ENCODE measurements at regions of chr6 and their contacts with region 1.

Region 1: DNA sequence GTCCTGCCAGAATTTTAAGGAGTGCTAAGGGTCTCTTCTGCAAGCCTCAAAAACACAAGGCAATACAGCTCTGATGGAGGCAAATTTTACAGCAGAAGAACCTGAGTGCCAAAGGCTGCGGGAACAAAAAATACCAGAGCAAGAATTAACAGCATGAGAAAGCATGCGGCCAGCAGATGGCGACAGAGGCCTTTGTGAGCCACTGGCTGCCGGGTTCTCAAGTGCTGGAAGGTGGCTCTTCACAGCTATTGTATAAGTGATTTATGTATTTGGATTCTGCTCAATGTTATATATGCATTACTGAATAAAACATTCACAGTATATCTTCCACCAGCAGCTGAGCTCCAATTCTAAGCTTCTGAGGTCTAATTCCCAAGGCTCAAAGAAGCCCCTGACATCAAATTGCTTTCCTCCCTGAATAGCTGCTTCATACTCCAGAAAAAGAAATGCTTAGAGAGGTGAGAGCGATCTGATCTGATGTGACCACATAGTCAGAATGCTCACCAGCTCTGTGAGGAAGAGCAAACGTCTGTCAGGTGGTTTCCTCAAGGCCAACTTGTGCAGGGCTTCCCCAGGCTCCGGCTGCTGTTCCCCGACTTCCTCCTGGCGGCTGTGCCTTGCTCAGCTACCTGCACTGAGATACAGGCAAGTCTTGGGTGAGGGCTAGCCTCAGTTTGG is 58.6 kb downstream of the PPP1R3G start:
- DNase-seq: peak; percentile 77
- H3K4me3 ChIP-seq: no peak overlapping the region; a peak in 1 of 4 replicates
- H3K27ac ChIP-seq: no peak overlapping the region
- H3K4me1 ChIP-seq: no peaks in the 10 kb centered on the region
- H3K27me3 ChIP-seq: no peaks in the 10 kb centered on the region
- CTCF ChIP-seq: peak; percentile 96
- EP300 ChIP-seq: no peak
- RAD21 ChIP-seq: peak; percentile 97

Region 2: DNA sequence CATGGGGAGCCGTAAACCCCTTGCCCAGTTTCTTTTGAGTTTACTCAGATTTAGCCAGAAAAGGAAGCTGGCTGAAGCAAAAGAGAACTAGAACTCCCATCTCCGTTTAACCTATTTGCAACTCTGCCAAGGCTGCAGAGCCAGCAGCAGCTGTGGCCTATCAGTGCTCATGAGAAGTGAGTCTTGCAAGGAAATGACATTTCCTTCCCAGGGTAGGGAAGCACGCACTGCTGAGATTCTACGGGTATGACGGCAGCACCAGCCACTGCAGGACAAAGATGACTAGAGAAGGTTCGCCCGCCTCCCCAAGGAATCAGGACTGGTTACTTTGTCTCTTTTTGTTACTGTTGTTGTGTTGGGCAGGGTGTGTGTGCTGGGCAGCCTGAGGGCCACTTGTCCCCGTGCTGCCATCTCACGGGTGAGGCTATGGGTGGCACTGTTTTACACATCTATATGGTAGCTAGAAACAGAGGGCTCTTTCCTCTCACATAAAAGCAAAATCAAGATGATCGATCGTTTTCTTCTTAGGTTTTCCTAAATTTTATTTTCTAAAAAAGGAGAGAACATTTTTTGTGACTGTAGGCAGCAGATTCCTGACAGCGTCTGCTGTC is 10.9 kb before region 1 on chr6:
- CTCF ChIA-PET with region 1: interaction called, 20 read pairs
- POLR2A ChIA-PET with region 1: no interaction called
- DNase-seq: no peak
- H3K4me3 ChIP-seq: no peak overlapping the region
- H3K27ac ChIP-seq: no peak overlapping the region
- H3K4me1 ChIP-seq: peaks cover 0 to 4% of the 10 kb centered on the region in 2 experiments; a peak in 1 of 4 replicates
- H3K27me3 ChIP-seq: no peaks in the 10 kb centered on the region
- CTCF ChIP-seq: no peak
- EP300 ChIP-seq: no peak
- RAD21 ChIP-seq: no peak

Region 3: GRCh38 chr6:5167501-5167900 is 23.7 kb after region 1 on chr6:
- CTCF ChIA-PET with region 1: interaction called, 18 read pairs
- POLR2A ChIA-PET with region 1: no interaction called
- DNase-seq: no peak
- H3K4me3 ChIP-seq: no peak overlapping the region
- H3K27ac ChIP-seq: no peak overlapping the region
- H3K4me1 ChIP-seq: peaks cover 0 to 7% of the 10 kb centered on the region in 2 experiments; a peak in 2 of 4 replicates
- H3K27me3 ChIP-seq: no peaks in the 10 kb centered on the region
- CTCF ChIP-seq: no peak
- EP300 ChIP-seq: no peak
- RAD21 ChIP-seq: no peak

Region 4: GRCh38 chr6:5205877-5206850 is 62.4 kb after region 1 on chr6:
- CTCF ChIA-PET with region 1: interaction called, 17 read pairs
- POLR2A ChIA-PET with region 1: no interaction called
- DNase-seq: peak; percentile 23
- H3K4me3 ChIP-seq: no peak overlapping the region
- H3K27ac ChIP-seq: peak overlapping the region in 1 of 2 experiments; percentile 40; a peak in 3 of 4 replicates
- H3K4me1 ChIP-seq: peaks cover 9 to 21% of the 10 kb centered on the region in 2 experiments; a peak in 3 of 4 replicates
- H3K27me3 ChIP-seq: no peaks in the 10 kb centered on the region
- CTCF ChIP-seq: no peak
- EP300 ChIP-seq: no peak
- RAD21 ChIP-seq: no peak

Region 5: DNA sequence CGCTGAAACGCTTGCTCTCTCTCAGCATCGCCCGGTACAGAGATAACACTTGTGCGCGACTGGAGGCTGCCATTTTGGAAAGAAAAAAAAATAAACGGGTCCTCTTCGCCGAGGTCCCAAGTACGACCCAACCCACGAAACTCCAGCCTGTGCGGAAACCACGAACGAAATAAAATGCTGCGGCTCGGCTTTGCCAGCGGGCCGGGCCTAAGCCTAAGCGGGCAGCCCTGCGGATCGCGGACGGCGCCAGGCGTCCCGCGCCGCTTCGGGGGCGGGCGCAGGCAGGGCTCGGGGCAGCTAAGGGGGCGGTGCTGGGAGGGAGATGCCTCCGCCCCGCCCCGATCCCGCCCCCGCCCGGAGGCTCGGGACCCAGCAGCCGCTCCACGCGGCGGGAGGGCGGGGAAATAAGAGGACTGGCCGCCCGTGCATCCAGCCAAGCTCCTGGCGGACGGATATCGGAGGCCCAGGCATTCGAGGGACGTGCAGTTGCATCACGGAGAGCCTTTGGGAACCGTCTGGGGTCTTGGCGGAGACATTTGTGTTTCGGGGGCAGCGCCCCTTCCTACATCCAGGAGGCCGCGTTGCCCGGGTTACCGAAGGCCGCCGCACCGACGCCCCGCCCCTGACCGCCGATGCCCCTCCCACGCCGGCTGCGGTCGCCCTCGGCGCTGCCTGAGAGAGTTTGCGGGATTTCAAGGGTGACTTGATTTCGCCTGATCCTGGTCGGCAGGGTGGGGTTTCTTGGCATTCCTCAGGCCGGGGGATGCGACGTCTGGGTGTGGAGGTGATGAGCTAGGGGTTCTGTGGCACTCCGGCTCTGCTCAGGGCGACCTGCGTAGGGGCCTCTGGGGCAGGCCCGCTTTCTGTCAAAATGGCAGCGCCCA is 117.1 kb after region 1 on chr6 and contains the starts of genes FARS2 and LYRM4:
- CTCF ChIA-PET with region 1: interaction called, 25 read pairs
- POLR2A ChIA-PET with region 1: no interaction called
- DNase-seq: peak; percentile 97
- H3K4me3 ChIP-seq: peak within 1 kb of the TSS; percentile 95 to 96
- H3K27ac ChIP-seq: peak within 1 kb of the TSS; percentile 92 to 97
- H3K4me1 ChIP-seq: peaks cover 7 to 8% of the 10 kb centered on the region in 2 experiments; a peak in 3 of 4 replicates
- H3K27me3 ChIP-seq: no peaks in the 10 kb centered on the region
- CTCF ChIP-seq: peak; percentile 30
- EP300 ChIP-seq: no peak
- RAD21 ChIP-seq: no peak
- polyA plus RNA-seq, gene FARS2: 12.5 and 16.1 TPM in 2 replicates
- polyA plus RNA-seq, gene LYRM4: 37.2 and 43.4 TPM in 2 replicates

Region 6: DNA sequence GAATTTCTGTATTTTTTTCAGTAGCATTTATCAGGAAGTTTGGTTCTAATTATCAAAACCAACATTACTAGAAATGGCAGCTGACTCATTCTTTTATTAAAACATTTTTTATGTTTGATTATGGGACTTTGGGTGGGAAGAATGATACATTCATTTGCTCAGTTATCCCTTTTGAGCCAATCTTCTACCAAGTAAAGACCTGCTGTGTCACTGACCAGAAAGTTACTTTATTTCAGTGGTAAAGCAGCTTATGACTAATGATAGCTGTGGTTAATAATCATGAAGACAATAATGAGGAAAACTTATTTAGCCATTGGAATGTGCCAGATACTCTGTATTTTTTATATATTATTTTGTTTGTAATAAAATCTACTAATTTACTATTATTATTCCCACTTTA is 259.8 kb after region 1 on chr6:
- CTCF ChIA-PET with region 1: interaction called, 14 read pairs
- POLR2A ChIA-PET with region 1: no interaction called
- DNase-seq: no peak
- H3K4me3 ChIP-seq: no peak overlapping the region
- H3K27ac ChIP-seq: no peak overlapping the region; a peak in 1 of 4 replicates
- H3K4me1 ChIP-seq: no peaks in the 10 kb centered on the region
- H3K27me3 ChIP-seq: no peaks in the 10 kb centered on the region
- CTCF ChIP-seq: no peak
- EP300 ChIP-seq: no peak
- RAD21 ChIP-seq: no peak

Measured in SK-N-SH (cell line).